ENCODE measurements at regions of chr12 and their contacts with region 1.

Region 1: DNA sequence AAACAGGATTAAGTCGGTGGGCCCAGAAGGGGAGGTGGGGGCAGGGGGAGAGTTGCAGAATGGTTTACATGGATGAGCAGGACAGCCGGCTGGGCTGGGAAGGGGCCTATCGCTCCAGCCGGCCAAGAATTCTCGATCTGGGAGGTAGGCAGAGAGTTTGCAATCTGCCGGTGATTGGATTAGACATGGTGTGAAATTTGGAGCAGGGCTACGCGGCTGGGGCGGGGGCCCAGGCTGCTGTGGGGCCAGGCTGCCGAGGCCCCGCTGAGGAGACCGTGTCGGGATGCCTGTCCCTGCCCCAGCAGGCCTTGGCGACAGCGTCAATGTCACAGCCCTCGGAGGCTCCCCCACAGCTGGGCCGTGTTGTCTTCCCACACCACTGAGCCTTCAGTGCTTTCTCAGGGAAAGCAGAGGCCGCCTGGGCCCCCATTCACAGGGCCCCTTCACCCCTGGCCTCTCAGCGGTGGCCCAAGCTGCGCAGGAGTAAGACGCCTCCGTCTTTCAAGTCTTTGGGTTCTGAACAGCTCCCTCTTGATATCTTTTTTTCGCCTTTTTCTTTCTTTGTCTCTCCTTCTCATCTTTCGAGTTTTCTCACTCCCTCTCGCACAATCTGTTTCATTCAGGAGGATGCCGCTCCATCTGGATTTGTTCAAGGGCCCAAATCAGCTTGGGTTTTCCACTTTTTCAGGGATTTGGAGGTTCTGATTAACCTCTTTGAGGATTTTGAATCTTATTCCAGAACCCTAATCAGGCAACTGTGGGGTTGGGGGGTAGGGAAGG is 117.5 kb upstream of the PARP11 start:
- DNase-seq: no peak
- ATAC-seq: no peak
- H3K4me3 ChIP-seq: no peak overlapping the region
- H3K27ac ChIP-seq: no peak overlapping the region
- H3K4me1 ChIP-seq: no peaks in the 10 kb centered on the region
- H3K27me3 ChIP-seq: no peaks in the 10 kb centered on the region
- CTCF ChIP-seq: no peak
- POLR2A ChIP-seq: no peak

Region 2: GRCh38 chr12:3947781-3948180 is 42.9 kb before region 1 on chr12:
- intact Hi-C with region 1: no loop called
- DNase-seq: no peak
- ATAC-seq: no peak
- H3K4me3 ChIP-seq: no peak overlapping the region
- H3K27ac ChIP-seq: no peak overlapping the region
- H3K4me1 ChIP-seq: no peaks in the 10 kb centered on the region
- H3K27me3 ChIP-seq: no peaks in the 10 kb centered on the region
- CTCF ChIP-seq: no peak
- POLR2A ChIP-seq: no peak

Region 3: GRCh38 chr12:4037747-4038312 is 47.1 kb after region 1 on chr12:
- intact Hi-C with region 1: loop called (anchors 5 kb)
- DNase-seq: peak; percentile 61 to 78 (median 78)
- ATAC-seq: peak; percentile 77
- H3K4me3 ChIP-seq: no peak overlapping the region
- H3K27ac ChIP-seq: no peak overlapping the region
- H3K4me1 ChIP-seq: peaks cover 11% of the 10 kb centered on the region
- H3K27me3 ChIP-seq: no peaks in the 10 kb centered on the region
- CTCF ChIP-seq: peak; percentile 39 to 92 (median 88)
- POLR2A ChIP-seq: no peak

Region 4: DNA sequence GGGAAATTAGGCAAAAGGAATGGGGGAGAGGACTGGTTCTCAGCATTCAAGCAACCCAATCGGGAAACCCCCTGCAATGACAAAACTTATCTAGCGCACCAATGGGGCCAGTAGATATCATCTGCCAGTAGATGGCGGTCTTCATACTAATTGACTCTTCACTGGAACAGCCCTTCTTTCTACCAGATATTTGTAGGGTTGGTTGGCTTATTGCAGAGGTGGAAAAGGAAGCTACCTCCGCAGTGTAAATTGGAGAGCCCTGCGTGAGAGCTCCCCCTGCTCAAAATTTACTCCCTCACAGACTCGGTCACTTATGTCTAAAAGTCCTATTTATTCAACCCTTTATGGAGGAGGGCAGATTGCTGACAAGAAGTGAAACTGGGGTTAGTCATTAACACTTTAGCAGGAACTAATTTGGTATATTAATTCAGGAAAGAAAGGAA is 116.8 kb after region 1 on chr12:
- intact Hi-C with region 1: no loop called
- DNase-seq: peak; percentile 23 to 59 (median 32)
- ATAC-seq: peak; percentile 60
- H3K4me3 ChIP-seq: no peak overlapping the region
- H3K27ac ChIP-seq: no peak overlapping the region
- H3K4me1 ChIP-seq: no peaks in the 10 kb centered on the region
- H3K27me3 ChIP-seq: no peaks in the 10 kb centered on the region
- CTCF ChIP-seq: peak in 6 of 7 experiments; percentile 27 to 49 (median 37)
- POLR2A ChIP-seq: no peak

Measured in body of pancreas (tissue), 4 donors.